ENCODE measurements at regions of chr1 and their contacts with region 1.

Region 1: DNA sequence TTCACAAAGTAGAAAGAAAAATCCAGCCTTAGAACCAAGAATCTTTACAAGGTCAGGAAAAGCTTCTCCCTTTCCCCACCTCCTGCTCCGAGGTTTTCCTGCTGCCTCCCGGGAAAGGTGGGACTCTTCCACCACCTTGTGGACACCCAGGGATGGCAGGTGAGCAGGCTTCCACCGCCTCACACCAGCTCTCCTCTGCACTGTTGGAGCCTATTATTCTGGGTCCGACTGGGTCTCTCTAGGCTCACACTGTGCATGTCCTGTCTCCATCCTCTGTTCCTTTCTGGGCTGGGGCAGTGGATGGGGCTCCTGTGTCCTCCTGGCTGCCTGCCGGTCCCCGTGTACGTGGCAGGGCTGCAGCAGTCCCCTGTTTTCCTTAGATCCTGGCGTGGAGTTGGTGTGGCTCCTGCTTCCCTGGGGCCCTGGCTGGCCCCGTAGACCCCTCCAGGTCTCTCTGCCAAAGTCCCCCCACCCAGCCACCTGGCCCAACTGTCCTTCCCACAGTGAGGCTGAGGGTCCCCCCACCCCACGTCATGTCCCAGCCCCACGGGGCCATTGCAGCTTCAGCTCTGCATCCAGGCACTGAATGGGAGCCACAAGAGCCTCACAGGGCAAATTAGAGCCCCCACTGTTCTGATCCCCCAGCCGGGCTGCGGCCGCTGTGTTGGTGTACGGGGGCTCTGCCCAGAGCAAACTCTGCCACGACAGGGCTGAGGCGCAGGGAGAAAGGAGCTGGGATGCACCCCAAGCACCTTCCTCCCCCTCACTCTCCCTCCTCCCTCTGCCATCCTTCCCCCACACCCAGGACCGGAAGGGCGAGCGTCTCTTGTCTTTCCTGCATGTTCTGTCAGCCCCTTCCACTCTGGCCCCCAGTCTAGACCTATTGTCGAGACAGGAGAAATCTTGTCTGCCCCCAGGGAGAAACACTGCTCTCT is 3.3 kb upstream of the SLC45A1 start:
- DNase-seq: peak; percentile 77
- ATAC-seq: peak; percentile 72

Region 2: GRCh38 chr1:8026153-8026975 is 288.2 kb before region 1 on chr1 and contains the start of gene ERRFI1:
- intact Hi-C with region 1: loop called (anchors 10 kb)
- DNase-seq: peak; percentile 98
- ATAC-seq: peak; percentile 97
- total RNA-seq, gene ERRFI1: 10.2 TPM

Region 3: GRCh38 chr1:8629241-8630091 is 314.9 kb after region 1 on chr1:
- intact Hi-C with region 1: no loop called
- DNase-seq: no peak
- ATAC-seq: peak; percentile 88